GM12878 (cell line): ENCODE measurements at regions of chr19 and their contacts with region 1.

Region 1: DNA sequence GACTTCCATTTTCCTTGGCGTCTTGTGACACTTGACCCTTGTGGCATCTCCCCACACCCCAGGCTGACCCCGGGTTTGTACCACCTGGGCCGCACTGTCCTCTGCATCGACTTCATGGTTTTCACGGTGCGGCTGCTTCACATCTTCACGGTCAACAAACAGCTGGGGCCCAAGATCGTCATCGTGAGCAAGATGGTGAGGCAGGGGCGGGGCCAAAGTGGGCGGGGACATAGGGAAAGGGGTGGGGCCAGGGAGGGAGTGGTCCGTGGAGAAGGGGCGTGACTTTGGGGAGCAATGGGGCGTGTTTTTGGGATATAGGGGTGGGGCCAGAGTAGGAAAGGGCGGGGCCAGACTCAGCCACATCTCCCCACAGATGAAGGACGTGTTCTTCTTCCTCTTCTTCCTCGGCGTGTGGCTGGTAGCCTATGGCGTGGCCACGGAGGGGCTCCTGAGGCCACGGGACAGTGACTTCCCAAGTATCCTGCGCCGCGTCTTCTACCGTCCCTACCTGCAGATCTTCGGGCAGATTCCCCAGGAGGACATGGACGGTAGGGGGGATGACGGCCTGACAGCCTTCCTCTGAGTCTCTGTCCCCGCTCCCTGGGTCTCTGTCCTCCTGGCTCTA is 42.8 kb downstream of the TRPM4 start:
- DNase-seq: no peak
- ATAC-seq: 0 out of 3 replicates have a peak, but pooled peaks have one; percentile 25
- H3K4me3 ChIP-seq: no peak overlapping the region
- H3K27ac ChIP-seq: no peak overlapping the region
- H3K4me1 ChIP-seq: no peaks in the 10 kb centered on the region
- H3K27me3 ChIP-seq: no peaks in the 10 kb centered on the region
- CTCF ChIP-seq: no peak
- EP300 ChIP-seq: no peak
- POLR2A ChIP-seq: no peak
- RAD21 ChIP-seq: no peak

Region 2: GRCh38 chr19:49073514-49074378 is 126.6 kb before region 1 on chr19:
- CTCF ChIA-PET with region 1: interaction called, 15 read pairs
- POLR2A ChIA-PET with region 1: no interaction called
- RAD21 ChIA-PET with region 1: no interaction called
- SMC1A ChIA-PET with region 1: interaction called, 5 read pairs
- in situ Hi-C with region 1: no loop called
- intact Hi-C with region 1: no loop called
- DNase-seq: no peak
- ATAC-seq: peak; percentile 41; the same call in 2 of the 3 replicates
- H3K4me3 ChIP-seq: no peak overlapping the region
- H3K27ac ChIP-seq: no peak overlapping the region
- H3K4me1 ChIP-seq: no peaks in the 10 kb centered on the region
- H3K27me3 ChIP-seq: peaks cover 0 to 3% of the 10 kb centered on the region in 2 experiments; a peak in 3 of 4 replicates
- CTCF ChIP-seq: peak in 2 of 3 experiments; percentile 12 to 34; a peak in 2 of 6 replicates
- EP300 ChIP-seq: no peak
- POLR2A ChIP-seq: no peak
- RAD21 ChIP-seq: no peak

Region 3: DNA sequence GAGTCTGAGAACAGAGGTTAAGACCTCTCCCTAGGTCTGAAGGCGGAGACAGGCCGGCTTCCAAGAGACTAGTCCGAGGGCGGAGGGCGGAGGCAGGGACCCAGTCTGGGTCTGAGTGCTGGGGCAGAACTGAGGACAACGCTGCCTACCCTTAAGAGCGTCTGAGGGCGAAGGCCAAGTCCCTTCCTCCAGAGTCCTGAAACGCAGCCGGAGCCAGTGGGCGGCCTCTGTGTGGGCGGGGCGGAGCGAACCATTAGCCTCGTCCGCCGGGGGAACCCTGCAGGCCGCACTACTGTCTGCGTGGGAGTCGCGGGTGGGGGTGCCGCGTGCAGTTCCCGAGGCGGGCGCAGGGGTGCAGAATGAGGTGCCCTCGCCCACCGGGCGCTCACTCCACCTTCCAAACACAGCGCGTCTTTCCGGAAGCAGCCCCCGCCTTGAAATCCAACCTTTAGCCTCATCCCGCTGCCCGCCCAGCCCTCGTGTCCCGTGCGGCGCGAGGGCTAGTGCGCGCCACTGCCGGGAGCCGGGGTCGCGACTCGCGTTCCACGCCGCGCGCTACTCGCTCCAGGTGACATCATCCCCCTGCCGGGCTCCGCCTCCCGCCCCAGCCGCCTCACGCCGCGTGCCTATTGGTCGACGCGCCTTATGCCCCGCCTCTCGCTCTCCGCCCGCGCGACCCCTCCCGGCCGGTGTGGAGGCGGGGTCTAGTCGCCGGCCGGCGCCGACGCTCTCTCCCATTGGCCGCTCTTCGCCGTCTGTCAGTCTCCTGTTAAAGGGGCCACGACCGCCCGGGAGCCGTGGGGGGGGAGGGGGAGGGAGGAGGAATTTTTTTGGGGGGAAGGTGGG is 81.6 kb before region 1 on chr19 and contains the start of gene C19orf73:
- CTCF ChIA-PET with region 1: interaction called, 10 read pairs
- POLR2A ChIA-PET with region 1: interaction called, 6 read pairs
- RAD21 ChIA-PET with region 1: interaction called, 5 read pairs
- SMC1A ChIA-PET with region 1: interaction called, 3 read pairs
- in situ Hi-C with region 1: no loop called
- intact Hi-C with region 1: no loop called
- DNase-seq: peak; percentile 69
- ATAC-seq: peak; percentile 91
- H3K4me3 ChIP-seq: peak within 1 kb of the TSS; percentile 60; the same call in 1 of the 2 replicates
- H3K27ac ChIP-seq: peak within 1 kb of the TSS; percentile 73
- H3K4me1 ChIP-seq: peaks cover 9% of the 10 kb centered on the region
- H3K27me3 ChIP-seq: peaks cover 7 to 8% of the 10 kb centered on the region in 2 experiments
- CTCF ChIP-seq: peak in 1 of 3 experiments; percentile 35; a peak in 1 of 6 replicates
- EP300 ChIP-seq: no peak
- POLR2A ChIP-seq: peak; percentile 78
- RAD21 ChIP-seq: no peak
- polyA plus RNA-seq, gene C19orf73: 0.20 to 0.69 TPM

Region 4: GRCh38 chr19:49148784-49149651 is 51.3 kb before region 1 on chr19:
- CTCF ChIA-PET with region 1: interaction called, 11 read pairs
- POLR2A ChIA-PET with region 1: no interaction called
- RAD21 ChIA-PET with region 1: interaction called, 3 read pairs
- SMC1A ChIA-PET with region 1: interaction called, 4 read pairs
- in situ Hi-C with region 1: no loop called
- intact Hi-C with region 1: loop called (anchors 5 kb)
- DNase-seq: no peak
- ATAC-seq: peak; percentile 71
- H3K4me3 ChIP-seq: no peak overlapping the region
- H3K27ac ChIP-seq: no peak overlapping the region
- H3K4me1 ChIP-seq: peaks cover 10% of the 10 kb centered on the region
- H3K27me3 ChIP-seq: peaks cover 6 to 22% of the 10 kb centered on the region in 2 experiments
- CTCF ChIP-seq: no peak
- EP300 ChIP-seq: no peak
- POLR2A ChIP-seq: no peak
- RAD21 ChIP-seq: no peak

Region 5: GRCh38 chr19:49186108-49186507 is 14.2 kb before region 1 on chr19:
- CTCF ChIA-PET with region 1: interaction called, 32 read pairs
- POLR2A ChIA-PET with region 1: no interaction called
- RAD21 ChIA-PET with region 1: no interaction called
- SMC1A ChIA-PET with region 1: no interaction called
- in situ Hi-C with region 1: no loop called
- intact Hi-C with region 1: no loop called
- DNase-seq: no peak
- ATAC-seq: no peak
- H3K4me3 ChIP-seq: no peak overlapping the region
- H3K27ac ChIP-seq: no peak overlapping the region
- H3K4me1 ChIP-seq: no peaks in the 10 kb centered on the region
- H3K27me3 ChIP-seq: no peaks in the 10 kb centered on the region
- CTCF ChIP-seq: no peak
- EP300 ChIP-seq: no peak
- POLR2A ChIP-seq: no peak
- RAD21 ChIP-seq: no peak